ENCODE measurements at regions of chr22 and their contacts with region 1.

Region 1: DNA sequence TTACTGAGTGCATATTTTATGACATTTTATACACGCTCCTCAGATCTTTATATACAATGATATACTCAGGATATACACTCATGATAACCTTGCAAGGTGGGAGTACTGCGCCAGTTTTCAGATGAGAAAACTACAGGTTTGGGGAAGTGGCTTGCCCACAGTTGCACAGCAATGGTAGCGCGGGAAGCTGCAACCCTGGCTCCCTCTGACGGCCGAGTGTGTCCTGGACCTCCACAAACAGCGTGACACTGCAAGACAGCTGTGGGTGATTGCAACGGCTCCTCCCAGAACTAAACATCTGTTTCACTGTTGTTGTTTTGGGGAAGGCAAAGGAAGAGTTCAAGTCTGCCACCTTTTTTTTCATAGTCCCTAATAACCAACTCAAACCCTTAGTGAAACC is 47.0 kb downstream of the PACSIN2 start:
- DNase-seq: peak; percentile 77
- ATAC-seq: peak; percentile 63
- H3K4me3 ChIP-seq: no peak overlapping the region
- H3K4me3 Mint-ChIP-seq: no peak overlapping the region
- H3K27ac ChIP-seq: no peak overlapping the region
- H3K27ac Mint-ChIP-seq: peak overlapping the region; percentile 46
- H3K4me1 ChIP-seq: peaks cover 7 to 16% of the 10 kb centered on the region in 2 donors
- H3K4me1 Mint-ChIP-seq: peaks cover 48% of the 10 kb centered on the region
- H3K27me3 ChIP-seq: no peaks in the 10 kb centered on the region
- H3K27me3 Mint-ChIP-seq: no peaks in the 10 kb centered on the region
- CTCF ChIP-seq: peak; percentile 46

Region 2: DNA sequence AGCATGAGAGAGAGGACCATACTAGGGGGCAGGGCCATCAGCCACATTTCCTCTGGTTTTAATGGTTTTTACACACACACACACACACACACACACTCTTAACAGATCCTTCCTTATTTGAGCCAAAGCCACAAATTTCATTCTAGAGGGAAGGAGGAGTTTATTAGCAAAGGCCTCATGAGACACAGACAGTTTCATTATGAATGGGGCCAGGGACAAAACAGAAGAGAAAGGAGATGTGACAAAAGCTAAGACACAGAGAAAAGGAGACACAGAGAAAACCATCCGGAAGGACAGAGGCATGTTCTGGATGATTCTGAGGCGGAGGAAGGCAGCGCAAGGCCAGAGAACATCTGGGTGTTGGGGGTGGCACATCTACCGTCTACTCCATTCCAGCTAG is 78.6 kb before region 1 on chr22:
- CTCF ChIA-PET with region 1: no interaction called
- POLR2A ChIA-PET with region 1: no interaction called
- intact Hi-C with region 1: loop called (anchors 1 kb)
- DNase-seq: peak; percentile 75
- ATAC-seq: peak; percentile 85
- H3K4me3 ChIP-seq: no peak overlapping the region
- H3K4me3 Mint-ChIP-seq: peak overlapping the region; percentile 76
- H3K27ac ChIP-seq: peak overlapping the region; percentile 28 to 65
- H3K27ac Mint-ChIP-seq: peak overlapping the region; percentile 87
- H3K4me1 ChIP-seq: peaks cover 32 to 63% of the 10 kb centered on the region in 2 donors
- H3K4me1 Mint-ChIP-seq: peaks cover 53% of the 10 kb centered on the region
- H3K27me3 ChIP-seq: no peaks in the 10 kb centered on the region
- H3K27me3 Mint-ChIP-seq: no peaks in the 10 kb centered on the region
- CTCF ChIP-seq: no peak

Region 3: GRCh38 chr22:42978453-42979103 is 10.6 kb after region 1 on chr22:
- CTCF ChIA-PET with region 1: no interaction called
- POLR2A ChIA-PET with region 1: no interaction called
- intact Hi-C with region 1: no loop called
- DNase-seq: no peak
- ATAC-seq: no peak
- H3K4me3 ChIP-seq: no peak overlapping the region
- H3K4me3 Mint-ChIP-seq: no peak overlapping the region
- H3K27ac ChIP-seq: peak overlapping the region in 1 of 2 donors; percentile 25
- H3K27ac Mint-ChIP-seq: peak overlapping the region; percentile 2
- H3K4me1 ChIP-seq: peaks cover 15 to 20% of the 10 kb centered on the region in 2 donors
- H3K4me1 Mint-ChIP-seq: peaks cover 41% of the 10 kb centered on the region
- H3K27me3 ChIP-seq: no peaks in the 10 kb centered on the region
- H3K27me3 Mint-ChIP-seq: no peaks in the 10 kb centered on the region
- CTCF ChIP-seq: no peak